Posterior vena cava (tissue), 2 donors: ENCODE measurements at regions of chr17 and their contacts with region 1.

Region 1: DNA sequence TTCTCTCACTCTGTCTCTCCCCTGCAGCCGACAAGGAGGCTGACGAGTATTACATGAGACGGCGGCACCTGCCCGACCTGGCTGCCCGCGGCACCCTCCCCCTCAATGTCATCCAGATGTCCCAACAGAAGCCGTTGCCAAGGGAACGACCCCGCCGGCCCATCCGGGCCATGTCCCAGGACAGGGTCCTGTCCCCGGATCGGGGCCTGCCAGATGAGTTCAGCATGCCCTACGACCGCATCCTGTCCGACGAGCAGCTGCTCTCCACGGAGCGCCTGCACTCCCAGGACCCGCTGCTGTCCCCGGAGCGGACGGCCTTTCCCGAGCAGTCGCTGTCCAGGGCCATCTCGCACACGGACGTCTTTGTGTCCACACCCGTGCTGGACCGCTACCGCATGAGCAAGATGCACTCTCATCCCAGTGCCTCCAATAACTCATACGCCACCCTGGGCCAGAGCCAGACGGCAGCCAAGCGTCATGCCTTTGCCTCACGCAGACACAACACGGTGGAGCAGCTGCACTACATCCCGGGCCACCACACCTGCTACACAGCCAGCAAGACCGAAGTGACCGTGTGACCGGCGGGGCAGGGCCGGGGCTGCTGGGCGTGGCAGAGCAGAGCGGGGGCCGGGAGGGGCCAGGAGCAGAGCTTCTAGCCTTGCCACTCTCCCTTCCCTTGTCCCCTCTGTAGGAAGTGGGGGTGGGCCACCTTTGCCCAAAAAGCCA is 40.4 kb upstream of the DNAH9 start:
- DNase-seq: no peak

Region 2: DNA sequence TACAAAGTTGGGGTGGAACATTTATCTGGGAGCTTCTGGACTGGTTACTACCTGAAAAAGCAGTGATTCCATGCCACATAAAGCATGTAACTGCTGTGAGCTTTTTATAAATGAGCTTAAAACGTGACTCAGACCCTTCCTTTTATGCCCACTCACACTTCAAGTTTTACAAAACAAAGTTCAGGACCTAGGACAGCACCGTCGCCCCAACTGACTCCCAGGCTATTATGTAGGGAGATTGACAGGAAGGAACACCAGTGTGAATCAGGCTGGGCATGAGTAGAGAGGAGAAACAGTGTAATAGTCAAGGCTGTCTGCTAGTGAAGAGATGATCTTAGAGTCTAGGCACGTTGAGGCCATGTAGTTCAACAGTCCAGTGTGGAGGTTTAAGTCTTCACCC is 51.2 kb before region 1 on chr17:
- intact Hi-C with region 1: no loop called
- DNase-seq: no peak

Region 3: DNA sequence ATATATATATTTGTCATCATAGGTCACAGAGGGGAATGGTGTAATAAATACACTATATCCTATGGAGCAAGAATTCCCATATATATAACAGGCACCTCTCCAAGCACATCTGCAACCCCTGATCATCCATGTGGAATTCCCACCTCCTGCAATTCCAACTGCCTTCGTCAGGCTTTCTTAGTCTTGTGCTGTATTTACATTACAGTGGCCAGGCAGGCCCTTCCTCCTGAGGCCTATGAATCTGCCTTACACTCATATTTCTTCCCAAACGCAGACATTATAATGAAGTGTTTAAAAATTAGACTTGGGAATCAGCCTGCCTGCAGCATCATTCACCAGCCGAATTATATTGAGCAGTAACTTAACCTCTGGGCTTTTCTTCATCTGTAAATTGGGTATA is 21.1 kb after region 1 on chr17:
- intact Hi-C with region 1: loop called in 1 of 2 experiments (anchors 1 kb)
- DNase-seq: no peak

Region 4: DNA sequence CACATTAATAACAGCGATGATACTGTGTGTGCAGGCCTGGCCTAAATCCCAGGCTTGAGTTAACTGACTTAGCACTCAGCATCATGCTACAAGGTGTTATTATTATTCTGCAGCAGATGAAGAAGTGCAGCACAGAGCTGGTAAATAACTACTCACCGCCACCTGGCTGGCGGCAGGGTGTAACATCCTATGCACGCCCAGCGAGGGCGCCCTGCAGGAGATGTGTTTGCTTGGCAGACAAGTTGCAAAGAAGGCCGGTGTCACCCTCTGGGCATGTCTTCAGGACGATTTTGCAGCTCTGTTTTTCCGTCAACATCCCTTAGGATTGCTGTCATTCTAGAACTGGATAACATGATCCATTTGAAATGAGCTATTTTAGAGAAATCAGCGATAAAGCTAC is 70.5 kb after region 1 on chr17:
- intact Hi-C with region 1: loop called in 1 of 2 experiments (anchors 10 kb)
- DNase-seq: no peak

Region 5: GRCh38 chr17:12242345-12242954 is 684.6 kb after region 1 on chr17:
- intact Hi-C with region 1: no loop called
- DNase-seq: no peak